ENCODE measurements at regions of chr1 and their contacts with region 1.

Region 1: DNA sequence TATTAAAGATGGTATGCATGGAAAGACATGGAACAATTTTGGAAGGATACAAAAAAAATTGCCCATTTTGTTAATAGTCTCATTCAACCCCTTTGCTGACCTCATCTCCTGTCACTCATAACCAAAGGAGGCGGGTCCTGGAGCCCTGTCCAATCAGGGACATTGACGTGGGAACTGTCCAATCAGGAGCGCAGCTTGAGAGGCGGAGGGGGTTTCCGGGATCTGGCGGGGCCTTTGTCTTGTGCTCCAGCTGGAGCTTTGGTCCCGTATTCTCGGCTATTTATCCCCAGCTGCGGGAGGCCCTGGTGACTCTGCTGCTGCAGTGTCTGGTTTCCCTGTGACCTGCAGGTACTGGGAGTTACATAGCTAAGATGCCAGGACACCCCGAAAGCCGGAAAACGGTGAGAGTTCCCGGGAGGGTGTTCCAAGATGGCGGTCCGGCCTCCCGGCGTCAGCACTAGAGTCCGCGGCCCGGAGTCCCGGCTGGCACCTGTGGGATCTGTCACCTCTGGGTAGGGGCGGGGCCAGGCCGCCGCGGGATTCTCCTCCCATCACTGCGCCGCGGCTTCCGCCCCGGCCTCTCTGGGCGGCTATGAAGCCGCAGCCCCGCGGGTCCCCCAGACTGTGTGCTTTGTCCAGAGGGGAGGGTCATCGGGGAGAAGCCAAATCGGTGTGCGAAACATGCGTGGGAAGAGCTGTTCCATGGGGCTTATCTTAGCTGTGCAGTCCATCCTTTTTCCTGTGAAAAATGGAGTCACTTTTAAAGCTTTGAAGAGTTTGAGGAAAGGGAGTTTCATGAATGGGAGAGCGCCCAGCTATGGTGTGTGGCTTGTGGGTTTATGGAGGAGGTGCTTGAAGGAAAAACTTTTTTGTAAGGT is at the start of gene ZNF678:
- DNase-seq: peak; percentile 88 to 94
- ATAC-seq: peak; percentile 92 to 93 (median 92)
- H3K4me3 ChIP-seq: peak within 1 kb of the TSS; percentile 81
- H3K4me3 Mint-ChIP-seq: peak within 1 kb of the TSS; percentile 96
- H3K27ac ChIP-seq: peak within 1 kb of the TSS; percentile 83
- H3K27ac Mint-ChIP-seq: peak within 1 kb of the TSS; percentile 94 to 96
- H3K4me1 ChIP-seq: peaks cover 17% of the 10 kb centered on the region
- H3K4me1 Mint-ChIP-seq: peaks cover 33 to 52% of the 10 kb centered on the region in 2 donors
- H3K27me3 ChIP-seq: peaks cover 5% of the 10 kb centered on the region
- H3K27me3 Mint-ChIP-seq: peaks cover 24 to 30% of the 10 kb centered on the region in 2 donors
- CTCF ChIP-seq: no peak
- total RNA-seq, gene ZNF678: 9.7 to 14.0 (median 10.7) TPM

Region 2: DNA sequence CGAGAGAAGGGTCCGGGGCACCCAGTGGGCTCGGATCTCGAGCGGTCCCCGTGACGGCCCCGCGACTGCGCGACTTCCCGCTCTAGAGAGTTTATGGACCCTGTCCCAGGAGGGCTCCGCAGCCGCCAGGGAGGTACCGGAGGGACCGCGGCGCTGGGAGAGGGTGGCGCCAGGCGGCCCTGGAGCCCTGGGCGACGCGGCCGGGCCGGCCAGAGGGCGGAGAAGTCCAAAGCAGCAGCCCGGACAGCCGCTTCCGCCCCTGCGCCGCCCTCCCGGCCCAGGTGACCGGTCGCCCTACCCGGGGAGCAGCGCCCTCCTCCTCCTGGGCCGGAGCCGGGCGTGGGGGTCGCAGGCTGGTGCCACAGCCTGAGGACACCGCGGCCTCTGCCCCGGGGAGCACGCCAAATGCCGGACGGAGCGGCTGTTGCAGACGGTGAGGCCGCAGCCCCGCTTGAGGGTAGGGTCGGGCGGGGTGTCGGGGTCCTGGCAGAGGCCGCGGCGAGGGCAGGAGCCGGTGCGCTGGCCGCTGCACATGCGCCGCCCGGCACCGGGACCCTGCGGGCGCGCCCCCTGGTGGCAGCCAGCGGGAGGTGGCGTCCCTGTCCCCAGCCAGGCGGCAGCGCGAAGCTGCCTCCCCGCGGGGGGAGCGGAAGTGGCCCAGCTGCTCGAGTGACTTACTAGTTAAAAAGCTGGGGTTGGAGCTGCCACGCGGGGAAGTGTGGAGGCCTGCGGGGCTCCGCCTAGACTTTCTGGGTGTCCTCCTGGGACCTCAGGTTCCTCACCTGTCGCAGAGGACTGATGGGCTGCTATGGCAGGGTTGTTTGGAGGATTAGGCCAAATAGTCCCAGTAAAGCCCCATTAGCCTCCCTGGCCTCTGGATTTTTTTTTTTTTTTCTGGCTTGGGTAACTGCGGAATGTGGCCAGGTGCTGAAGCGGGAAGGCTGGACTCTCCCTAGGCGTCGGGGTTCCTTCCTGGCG is 21.1 kb before region 1 on chr1:
- intact Hi-C with region 1: loop called (anchors 1 kb)
- DNase-seq: peak; percentile 89 to 93
- ATAC-seq: peak; percentile 96 to 98 (median 98)
- H3K4me3 ChIP-seq: peak overlapping the region; percentile 37
- H3K4me3 Mint-ChIP-seq: peak overlapping the region; percentile 72
- H3K27ac ChIP-seq: peak overlapping the region; percentile 44
- H3K27ac Mint-ChIP-seq: peak overlapping the region; percentile 53 to 75
- H3K4me1 ChIP-seq: peaks cover 16% of the 10 kb centered on the region
- H3K4me1 Mint-ChIP-seq: peaks cover 0 to 14% of the 10 kb centered on the region in 2 donors
- H3K27me3 ChIP-seq: no peaks in the 10 kb centered on the region
- H3K27me3 Mint-ChIP-seq: peaks cover 0 to 3% of the 10 kb centered on the region in 2 donors
- CTCF ChIP-seq: peak; percentile 97

Region 3: GRCh38 chr1:227607336-227607898 is 43.9 kb after region 1 on chr1:
- intact Hi-C with region 1: loop called (anchors 5 kb)
- DNase-seq: peak in 1 of 2 donors; percentile 20
- ATAC-seq: peak; percentile 92 to 99 (median 95)
- H3K4me3 ChIP-seq: no peak overlapping the region
- H3K4me3 Mint-ChIP-seq: peak overlapping the region; percentile 80
- H3K27ac ChIP-seq: no peak overlapping the region
- H3K27ac Mint-ChIP-seq: peak overlapping the region; percentile 89 to 94
- H3K4me1 ChIP-seq: no peaks in the 10 kb centered on the region
- H3K4me1 Mint-ChIP-seq: peaks cover 21 to 38% of the 10 kb centered on the region in 2 donors
- H3K27me3 ChIP-seq: no peaks in the 10 kb centered on the region
- H3K27me3 Mint-ChIP-seq: no peaks in the 10 kb centered on the region
- CTCF ChIP-seq: no peak

Region 4: DNA sequence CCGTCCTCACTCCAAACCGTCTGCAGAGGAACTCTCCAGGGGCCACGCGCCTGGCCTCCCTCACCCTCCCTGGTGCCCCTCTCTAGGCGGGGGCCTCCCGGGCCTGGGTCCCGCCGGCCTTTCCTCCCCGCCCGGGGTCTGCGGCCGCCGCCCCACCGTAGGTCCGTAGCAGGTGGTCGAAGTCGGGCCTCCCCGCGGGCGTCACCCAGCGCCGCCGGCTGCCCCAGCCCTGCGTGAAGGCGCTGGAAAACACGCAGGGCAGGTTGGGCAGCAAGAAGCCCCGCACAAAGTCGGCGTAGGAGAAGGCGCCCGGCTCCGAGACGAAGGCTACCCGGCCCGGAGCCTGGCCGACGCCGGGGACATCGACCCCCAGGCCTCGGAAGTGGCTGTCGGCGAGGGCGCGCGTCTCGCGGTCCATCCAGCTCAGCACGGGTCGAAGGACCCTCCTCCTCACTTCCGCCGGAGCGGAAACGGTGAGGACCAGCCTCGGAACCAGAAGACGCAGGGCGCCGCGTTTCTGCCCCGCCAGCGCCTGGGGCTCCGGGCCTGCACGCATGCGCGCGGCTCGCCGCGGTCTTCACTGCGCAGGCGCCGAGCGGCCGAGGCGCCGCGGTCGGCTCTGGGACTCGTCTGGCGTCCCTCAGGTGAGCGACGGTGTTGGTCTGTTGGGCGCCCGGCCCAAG is 171.4 kb after region 1 on chr1 and contains the starts of genes JMJD4 and SNAP47:
- intact Hi-C with region 1: loop called (anchors 5 kb)
- DNase-seq: peak; percentile 94 to 97
- ATAC-seq: peak; percentile 93 to 94 (median 94)
- H3K4me3 ChIP-seq: peak within 1 kb of the TSS; percentile 56
- H3K4me3 Mint-ChIP-seq: peak within 1 kb of the TSS; percentile 96
- H3K27ac ChIP-seq: peak within 1 kb of the TSS; percentile 73
- H3K27ac Mint-ChIP-seq: peak within 1 kb of the TSS; percentile 87 to 92
- H3K4me1 ChIP-seq: peaks cover 25% of the 10 kb centered on the region
- H3K4me1 Mint-ChIP-seq: peaks cover 29 to 41% of the 10 kb centered on the region in 2 donors
- H3K27me3 ChIP-seq: no peaks in the 10 kb centered on the region
- H3K27me3 Mint-ChIP-seq: no peaks in the 10 kb centered on the region
- CTCF ChIP-seq: no peak
- total RNA-seq, gene JMJD4: 8.8 to 12.4 (median 12.3) TPM
- total RNA-seq, gene SNAP47: 19.0 to 24.2 (median 23.1) TPM

Measured in natural killer cell (primary cell).